ENCODE measurements at regions of chr9 and their contacts with region 1.

Region 1: GRCh38 chr9:35116898-35117551 is 1.4 kb upstream of the ATOSB start:
- DNase-seq: peak; percentile 93
- ATAC-seq: peak; percentile 54
- H3K4me3 ChIP-seq: peak overlapping the region; percentile 55 to 72 (median 59)
- H3K4me3 Mint-ChIP-seq: peak overlapping the region; percentile 98
- H3K27ac ChIP-seq: peak overlapping the region in 1 of 2 donors; percentile 93
- H3K27ac Mint-ChIP-seq: peak overlapping the region; percentile 97
- H3K4me1 ChIP-seq: peaks cover 30 to 37% of the 10 kb centered on the region in 2 donors
- H3K4me1 Mint-ChIP-seq: peaks cover 40% of the 10 kb centered on the region
- H3K27me3 ChIP-seq: no peaks in the 10 kb centered on the region
- H3K27me3 Mint-ChIP-seq: peaks cover 3% of the 10 kb centered on the region
- CTCF ChIP-seq: peak; percentile 94

Region 2: DNA sequence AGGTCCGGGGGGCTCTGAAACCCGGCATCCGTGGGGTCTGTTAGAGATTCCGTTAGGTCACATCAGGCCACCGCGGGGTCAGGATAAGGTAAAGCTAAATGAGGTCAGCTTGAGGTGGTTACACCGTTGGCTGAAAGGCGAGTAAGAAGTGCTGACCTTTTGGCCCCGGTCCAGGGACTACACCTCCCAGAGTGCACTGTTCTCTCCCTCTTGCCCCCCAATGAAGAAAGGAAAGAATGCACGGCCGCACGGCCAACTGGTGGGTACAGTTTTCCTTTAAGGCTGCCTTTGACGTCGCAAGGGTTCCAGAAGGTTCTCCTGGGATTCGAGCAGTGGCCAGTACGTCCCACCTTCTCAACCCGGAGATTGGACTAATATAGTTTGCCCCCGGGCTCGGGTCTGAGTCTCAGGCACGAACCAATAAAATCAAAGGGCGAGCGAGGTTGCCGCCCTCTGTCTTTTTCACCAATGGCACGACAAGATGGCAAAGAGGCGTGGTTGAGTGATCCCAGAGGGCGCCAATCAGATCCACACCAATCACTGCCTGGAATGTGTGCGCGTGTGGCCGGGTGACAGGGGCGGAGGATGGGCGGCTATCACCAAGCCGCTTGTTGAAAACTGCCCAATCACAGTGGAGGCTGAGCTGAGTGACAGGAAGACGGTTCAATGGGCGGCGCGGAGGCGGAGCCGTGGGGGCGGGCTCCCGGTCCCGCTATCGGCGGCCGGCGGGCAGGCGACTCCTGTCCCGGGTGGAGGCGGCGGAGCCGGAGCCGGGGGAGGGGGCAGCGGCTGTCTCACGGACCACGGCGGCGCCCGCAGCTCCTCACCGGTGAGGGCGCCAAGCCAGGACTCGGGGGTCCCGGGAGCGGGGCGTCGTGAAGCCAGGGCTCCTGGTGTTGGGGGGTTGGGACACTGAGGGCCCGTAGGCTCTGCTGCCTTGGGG is 127.8 kb before region 1 on chr9 and contains the start of gene DNAJB5:
- CTCF ChIA-PET with region 1: interaction called, 3 read pairs
- POLR2A ChIA-PET with region 1: no interaction called
- intact Hi-C with region 1: loop called (anchors 1 kb)
- DNase-seq: peak; percentile 98
- ATAC-seq: peak; percentile 96
- H3K4me3 ChIP-seq: peak within 1 kb of the TSS; percentile 74 to 95 (median 84)
- H3K4me3 Mint-ChIP-seq: peak within 1 kb of the TSS; percentile 94
- H3K27ac ChIP-seq: peak within 1 kb of the TSS; percentile 11 to 68
- H3K27ac Mint-ChIP-seq: peak within 1 kb of the TSS; percentile 78
- H3K4me1 ChIP-seq: peaks cover 42 to 51% of the 10 kb centered on the region in 2 donors
- H3K4me1 Mint-ChIP-seq: peaks cover 45% of the 10 kb centered on the region
- H3K27me3 ChIP-seq: no peaks in the 10 kb centered on the region
- H3K27me3 Mint-ChIP-seq: no peaks in the 10 kb centered on the region
- CTCF ChIP-seq: no peak
- total RNA-seq, gene DNAJB5: 1.0 and 2.4 TPM in 2 replicates

Region 3: GRCh38 chr9:35096035-35096849 is 20.8 kb before region 1 on chr9 and contains the start of gene PIGO:
- CTCF ChIA-PET with region 1: interaction called, 18 read pairs
- POLR2A ChIA-PET with region 1: interaction called, 3 read pairs
- intact Hi-C with region 1: loop called (anchors 1 kb)
- DNase-seq: peak; percentile 94
- ATAC-seq: peak; percentile 92
- H3K4me3 ChIP-seq: peak within 1 kb of the TSS; percentile 61 to 100 (median 93)
- H3K4me3 Mint-ChIP-seq: peak within 1 kb of the TSS; percentile 90
- H3K27ac ChIP-seq: peak within 1 kb of the TSS; percentile 99
- H3K27ac Mint-ChIP-seq: peak within 1 kb of the TSS; percentile 94
- H3K4me1 ChIP-seq: peaks cover 7 to 16% of the 10 kb centered on the region in 2 donors
- H3K4me1 Mint-ChIP-seq: peaks cover 34% of the 10 kb centered on the region
- H3K27me3 ChIP-seq: no peaks in the 10 kb centered on the region
- H3K27me3 Mint-ChIP-seq: no peaks in the 10 kb centered on the region
- CTCF ChIP-seq: peak; percentile 85
- total RNA-seq, gene PIGO: 32.5 and 34.7 TPM in 2 replicates

Region 4: GRCh38 chr9:35258676-35259474 is 141.8 kb after region 1 on chr9:
- CTCF ChIA-PET with region 1: interaction called, 32 read pairs
- POLR2A ChIA-PET with region 1: no interaction called
- intact Hi-C with region 1: no loop called
- DNase-seq: peak; percentile 56
- ATAC-seq: no peak
- H3K4me3 ChIP-seq: no peak overlapping the region
- H3K4me3 Mint-ChIP-seq: no peak overlapping the region
- H3K27ac ChIP-seq: no peak overlapping the region
- H3K27ac Mint-ChIP-seq: no peak overlapping the region
- H3K4me1 ChIP-seq: no peaks in the 10 kb centered on the region
- H3K4me1 Mint-ChIP-seq: no peaks in the 10 kb centered on the region
- H3K27me3 ChIP-seq: no peaks in the 10 kb centered on the region
- H3K27me3 Mint-ChIP-seq: peaks cover 12% of the 10 kb centered on the region
- CTCF ChIP-seq: peak; percentile 66

Region 5: DNA sequence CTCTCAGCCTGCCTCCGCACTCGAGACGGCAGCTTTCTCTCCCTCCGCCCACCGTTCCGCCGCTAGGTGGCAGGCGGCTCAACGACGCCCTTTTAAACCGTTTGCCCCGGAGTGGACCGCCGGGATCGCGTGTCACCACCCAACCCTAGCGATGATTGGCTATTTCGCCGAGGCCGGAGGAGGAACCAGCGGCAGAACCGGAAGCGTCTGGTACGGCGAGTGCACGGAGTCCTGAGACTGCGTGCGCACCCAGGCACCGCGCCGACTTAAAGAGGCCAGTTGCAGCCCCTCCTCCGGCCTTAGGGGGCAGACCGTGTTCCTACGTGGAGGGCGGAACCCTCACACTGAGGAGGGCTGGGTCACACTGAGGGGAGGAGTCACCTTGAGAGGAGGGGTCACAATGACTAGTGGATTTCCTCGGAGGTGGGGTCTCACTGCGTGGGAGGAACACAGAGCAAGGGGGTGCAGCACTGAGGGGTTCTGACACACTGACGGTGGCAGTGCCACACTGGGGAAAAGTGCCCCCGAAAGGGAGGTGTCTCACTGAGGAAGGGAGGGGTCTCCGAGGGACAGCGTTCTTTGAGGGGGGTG is 487.1 kb after region 1 on chr9:
- CTCF ChIA-PET with region 1: no interaction called
- POLR2A ChIA-PET with region 1: interaction called, 3 read pairs
- intact Hi-C with region 1: loop called (anchors 1 kb)
- DNase-seq: peak; percentile 100
- ATAC-seq: peak; percentile 86
- H3K4me3 ChIP-seq: peak overlapping the region; percentile 71 to 84 (median 81)
- H3K4me3 Mint-ChIP-seq: peak overlapping the region; percentile 97
- H3K27ac ChIP-seq: peak overlapping the region; percentile 80 to 84
- H3K27ac Mint-ChIP-seq: peak overlapping the region; percentile 99
- H3K4me1 ChIP-seq: peaks cover 26 to 46% of the 10 kb centered on the region in 2 donors
- H3K4me1 Mint-ChIP-seq: peaks cover 36% of the 10 kb centered on the region
- H3K27me3 ChIP-seq: no peaks in the 10 kb centered on the region
- H3K27me3 Mint-ChIP-seq: no peaks in the 10 kb centered on the region
- CTCF ChIP-seq: peak; percentile 97

Region 6: GRCh38 chr9:35756275-35757225 is 639.5 kb after region 1 on chr9:
- CTCF ChIA-PET with region 1: no interaction called
- POLR2A ChIA-PET with region 1: no interaction called
- intact Hi-C with region 1: loop called (anchors 5 kb)
- DNase-seq: peak; percentile 84
- ATAC-seq: peak; percentile 80
- H3K4me3 ChIP-seq: peak overlapping the region; percentile 39 to 85 (median 81)
- H3K4me3 Mint-ChIP-seq: peak overlapping the region; percentile 93
- H3K27ac ChIP-seq: peak overlapping the region; percentile 92 to 94
- H3K27ac Mint-ChIP-seq: peak overlapping the region; percentile 97
- H3K4me1 ChIP-seq: peaks cover 34 to 44% of the 10 kb centered on the region in 2 donors
- H3K4me1 Mint-ChIP-seq: peaks cover 65% of the 10 kb centered on the region
- H3K27me3 ChIP-seq: no peaks in the 10 kb centered on the region
- H3K27me3 Mint-ChIP-seq: no peaks in the 10 kb centered on the region
- CTCF ChIP-seq: peak; percentile 70